Activated T-helper 1 cell treated with anti-CD3 and anti-CD28 coated beads, Interleukin-12 subunit alpha, Interleukin-12 subunit beta, Interleukin-2, Interleukin-4 antibody, amounts not matched to agents 30 ng/mL and 10 ng/mL and 1 ng/mL, durations not matched to agents 14 hours and 24 hours and 36 hours (primary cell): ENCODE measurements at regions of chr11 and their contacts with region 1.

Region 1: GRCh38 chr11:107565219-107565937 is at the start of gene ALKBH8:
- DNase-seq: peak; percentile 71
- H3K4me3 Mint-ChIP-seq: peak within 1 kb of the TSS; percentile 99
- H3K27ac Mint-ChIP-seq: peak within 1 kb of the TSS; percentile 98
- H3K4me1 Mint-ChIP-seq: peaks cover 52% of the 10 kb centered on the region
- H3K27me3 Mint-ChIP-seq: no peaks in the 10 kb centered on the region
- total RNA-seq, gene ALKBH8: 14.7 and 16.0 TPM in 2 replicates

Region 2: GRCh38 chr11:107397357-107397756 is 168.0 kb before region 1 on chr11:
- intact Hi-C with region 1: no loop called
- DNase-seq: no peak
- H3K4me3 Mint-ChIP-seq: no peak overlapping the region
- H3K27ac Mint-ChIP-seq: no peak overlapping the region
- H3K4me1 Mint-ChIP-seq: no peaks in the 10 kb centered on the region
- H3K27me3 Mint-ChIP-seq: no peaks in the 10 kb centered on the region

Region 3: GRCh38 chr11:107457558-107458271 is 107.7 kb before region 1 on chr11 and contains the start of gene CWF19L2:
- intact Hi-C with region 1: loop called (anchors 1 kb)
- DNase-seq: peak; percentile 88
- H3K4me3 Mint-ChIP-seq: peak within 1 kb of the TSS; percentile 91
- H3K27ac Mint-ChIP-seq: peak within 1 kb of the TSS; percentile 87
- H3K4me1 Mint-ChIP-seq: peaks cover 28% of the 10 kb centered on the region
- H3K27me3 Mint-ChIP-seq: peaks cover 9% of the 10 kb centered on the region
- total RNA-seq, gene CWF19L2: 16.5 and 16.7 TPM in 2 replicates

Region 4: GRCh38 chr11:107590460-107591377 is 25.3 kb after region 1 on chr11 and contains the start of gene ELMOD1:
- intact Hi-C with region 1: loop called (anchors 1 kb)
- DNase-seq: peak; percentile 2
- H3K4me3 Mint-ChIP-seq: peak within 1 kb of the TSS; percentile 85
- H3K27ac Mint-ChIP-seq: peak within 1 kb of the TSS; percentile 56
- H3K4me1 Mint-ChIP-seq: peaks cover 26% of the 10 kb centered on the region
- H3K27me3 Mint-ChIP-seq: peaks cover 84% of the 10 kb centered on the region
- total RNA-seq, gene ELMOD1: not detected in 2 replicates

Region 5: GRCh38 chr11:107770551-107770951 is 205.2 kb after region 1 on chr11:
- intact Hi-C with region 1: loop called (anchors 5 kb)
- DNase-seq: no peak
- H3K4me3 Mint-ChIP-seq: no peak overlapping the region
- H3K27ac Mint-ChIP-seq: no peak overlapping the region
- H3K4me1 Mint-ChIP-seq: peaks cover 4% of the 10 kb centered on the region
- H3K27me3 Mint-ChIP-seq: peaks cover 7% of the 10 kb centered on the region

Region 6: DNA sequence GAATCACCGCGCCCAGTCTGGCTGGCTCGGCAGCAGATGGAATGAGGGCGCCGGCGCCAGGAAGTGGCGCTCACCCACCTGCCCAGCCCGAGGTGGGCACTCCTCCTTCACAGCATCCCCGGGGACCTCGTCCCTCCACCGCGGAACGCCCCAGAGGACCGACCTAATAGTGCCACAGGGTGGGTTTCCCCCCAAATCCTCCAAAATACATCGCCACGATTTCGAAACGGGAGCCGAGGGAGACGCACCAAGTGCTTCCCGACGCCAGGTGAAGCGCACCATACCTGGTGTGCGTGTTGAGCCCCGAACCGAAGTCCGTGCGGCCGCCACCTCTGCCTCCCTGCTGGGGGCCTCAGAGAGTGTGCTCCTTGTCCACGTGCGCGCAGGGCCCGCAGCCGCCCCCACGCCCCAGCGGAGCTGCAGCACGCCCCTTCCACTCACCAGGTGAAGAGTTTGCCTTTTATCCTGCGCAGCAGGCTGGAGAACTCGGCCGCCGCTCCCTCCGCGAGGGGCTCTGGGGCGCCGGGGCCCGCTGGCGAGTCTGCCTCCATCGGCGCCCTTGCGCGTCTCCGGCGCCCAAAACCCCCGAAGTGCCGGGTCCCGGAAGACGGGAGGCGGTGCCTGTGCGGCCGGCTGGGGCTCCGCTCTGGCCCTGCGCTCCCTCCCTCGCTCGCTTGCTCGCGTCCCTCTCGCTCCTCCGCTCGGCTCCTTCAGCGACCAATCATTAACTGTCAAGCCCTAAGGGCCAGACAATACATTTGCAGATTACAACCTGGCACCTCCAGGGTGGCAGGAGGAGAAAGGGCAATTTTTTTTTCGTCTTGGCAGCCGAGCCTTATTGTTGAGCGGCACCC is 293.1 kb after region 1 on chr11 and contains the start of gene SLC35F2:
- intact Hi-C with region 1: loop called (anchors 1 kb)
- DNase-seq: peak; percentile 62
- H3K4me3 Mint-ChIP-seq: peak within 1 kb of the TSS; percentile 95
- H3K27ac Mint-ChIP-seq: peak within 1 kb of the TSS; percentile 83
- H3K4me1 Mint-ChIP-seq: peaks cover 26% of the 10 kb centered on the region
- H3K27me3 Mint-ChIP-seq: peaks cover 8% of the 10 kb centered on the region
- total RNA-seq, gene SLC35F2: 36.5 and 38.0 TPM in 2 replicates

Region 7: GRCh38 chr11:108467091-108467823 is 901.9 kb after region 1 on chr11 and contains the start of gene C11orf65:
- intact Hi-C with region 1: loop called (anchors 2 kb)
- DNase-seq: peak; percentile 94
- H3K4me3 Mint-ChIP-seq: peak within 1 kb of the TSS; percentile 98
- H3K27ac Mint-ChIP-seq: peak within 1 kb of the TSS; percentile 100
- H3K4me1 Mint-ChIP-seq: peaks cover 23% of the 10 kb centered on the region
- H3K27me3 Mint-ChIP-seq: peaks cover 3% of the 10 kb centered on the region
- total RNA-seq, gene C11orf65: 0.57 and 0.64 TPM in 2 replicates

Region 8: DNA sequence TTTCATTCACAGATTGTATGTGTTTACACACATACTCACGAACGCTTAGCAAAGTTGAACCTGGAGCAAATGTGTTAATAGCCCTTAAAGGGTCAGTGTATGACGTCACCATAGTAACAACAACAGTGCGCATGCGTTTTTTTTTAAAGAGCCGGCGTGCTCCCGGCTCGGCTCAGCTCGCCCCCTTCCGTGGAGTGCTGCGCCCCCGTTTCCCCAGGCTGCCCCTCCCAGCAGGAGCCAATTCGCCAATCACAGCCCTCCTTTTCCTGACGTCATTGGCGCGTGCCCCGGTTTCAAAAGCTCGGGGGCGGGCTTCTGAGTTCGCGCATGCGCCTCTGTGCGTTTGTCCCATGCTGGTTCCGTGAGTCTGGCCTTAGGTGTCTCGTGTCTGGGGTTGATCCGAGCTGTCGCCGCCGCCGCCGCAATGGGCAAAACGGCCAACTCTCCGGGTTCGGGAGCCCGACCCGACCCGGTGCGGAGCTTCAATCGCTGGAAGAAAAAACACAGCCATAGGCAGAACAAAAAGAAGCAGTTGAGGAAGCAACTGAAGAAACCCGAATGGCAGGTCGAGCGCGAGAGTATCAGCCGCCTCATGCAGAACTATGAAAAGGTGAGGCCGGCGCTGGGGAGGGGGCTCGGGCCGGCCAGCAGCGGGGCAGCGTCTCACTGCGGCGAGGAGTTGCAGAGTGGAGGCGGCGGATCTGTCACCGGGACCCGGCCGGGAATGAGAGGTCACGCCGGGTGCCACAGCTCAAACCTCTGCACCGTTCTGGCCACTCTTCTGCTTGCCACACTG is 1099.5 kb after region 1 on chr11 and contains the start of gene DDX10:
- intact Hi-C with region 1: loop called (anchors 5 kb)
- DNase-seq: peak; percentile 98
- H3K4me3 Mint-ChIP-seq: peak within 1 kb of the TSS; percentile 100
- H3K27ac Mint-ChIP-seq: peak within 1 kb of the TSS; percentile 97
- H3K4me1 Mint-ChIP-seq: peaks cover 45% of the 10 kb centered on the region
- H3K27me3 Mint-ChIP-seq: peaks cover 7% of the 10 kb centered on the region
- total RNA-seq, gene DDX10: 68.4 and 68.8 TPM in 2 replicates